Endothelial cell of umbilical vein (primary cell): ENCODE measurements at regions of chr12 and their contacts with region 1.

Region 1: GRCh38 chr12:60437297-60437696 is 841.5 kb downstream of the SLC16A7 start:
- DNase-seq: peak; percentile 89
- H3K4me3 ChIP-seq: no peak overlapping the region
- H3K27ac ChIP-seq: peak overlapping the region; percentile 84
- H3K4me1 ChIP-seq: peaks cover 11% of the 10 kb centered on the region
- H3K27me3 ChIP-seq: no peaks in the 10 kb centered on the region
- CTCF ChIP-seq: no peak
- POLR2A ChIP-seq: no peak

Region 2: DNA sequence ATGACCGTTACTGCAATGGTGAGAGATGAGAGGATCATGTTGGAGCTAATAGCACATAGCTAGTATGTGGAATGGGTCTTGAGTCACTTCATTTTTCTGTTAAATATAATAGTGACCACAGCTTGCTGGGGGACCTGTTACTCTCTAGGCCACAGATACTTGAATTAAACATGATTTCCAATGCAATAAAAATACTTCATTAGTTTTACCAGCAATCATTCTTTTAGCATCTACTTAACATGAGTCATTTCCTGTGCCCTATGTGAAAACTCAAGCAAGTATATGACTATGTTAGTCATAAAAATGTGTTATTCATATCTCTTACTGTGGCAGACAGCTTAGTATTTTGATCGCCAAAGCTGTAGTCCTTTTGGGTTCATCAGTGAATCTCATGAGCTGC is 42.6 kb before region 1 on chr12:
- CTCF ChIA-PET with region 1: interaction called, 3 read pairs
- POLR2A ChIA-PET with region 1: no interaction called
- dilution Hi-C with region 1: no loop called
- intact Hi-C with region 1: loop called (anchors 2 kb)
- DNase-seq: peak; percentile 79
- H3K4me3 ChIP-seq: no peak overlapping the region
- H3K27ac ChIP-seq: no peak overlapping the region
- H3K4me1 ChIP-seq: peaks cover 7% of the 10 kb centered on the region
- H3K27me3 ChIP-seq: no peaks in the 10 kb centered on the region
- CTCF ChIP-seq: no peak
- POLR2A ChIP-seq: no peak